ENCODE measurements at regions of chr18 and their contacts with region 1.

Region 1: GRCh38 chr18:22933206-22933957 is at the start of gene RBBP8:
- DNase-seq: peak; percentile 60 to 92 (median 81)
- ATAC-seq: peak; percentile 84
- H3K4me3 ChIP-seq: peak within 1 kb of the TSS; percentile 92
- H3K4me3 Mint-ChIP-seq: peak within 1 kb of the TSS; percentile 84 to 97 (median 92)
- H3K27ac ChIP-seq: peak within 1 kb of the TSS; percentile 86
- H3K27ac Mint-ChIP-seq: peak within 1 kb of the TSS in 8 of 9 donors; percentile 76 to 95 (median 89)
- H3K4me1 ChIP-seq: no peaks in the 10 kb centered on the region
- H3K4me1 Mint-ChIP-seq: peaks cover 7 to 37% (median 12%) of the 10 kb centered on the region in 7 donors
- H3K27me3 ChIP-seq: no peaks in the 10 kb centered on the region
- H3K27me3 Mint-ChIP-seq: peaks cover 0 to 5% (median 0%) of the 10 kb centered on the region in 5 donors
- total RNA-seq, gene RBBP8: 1.5 to 55.8 (median 2.5) TPM

Region 2: DNA sequence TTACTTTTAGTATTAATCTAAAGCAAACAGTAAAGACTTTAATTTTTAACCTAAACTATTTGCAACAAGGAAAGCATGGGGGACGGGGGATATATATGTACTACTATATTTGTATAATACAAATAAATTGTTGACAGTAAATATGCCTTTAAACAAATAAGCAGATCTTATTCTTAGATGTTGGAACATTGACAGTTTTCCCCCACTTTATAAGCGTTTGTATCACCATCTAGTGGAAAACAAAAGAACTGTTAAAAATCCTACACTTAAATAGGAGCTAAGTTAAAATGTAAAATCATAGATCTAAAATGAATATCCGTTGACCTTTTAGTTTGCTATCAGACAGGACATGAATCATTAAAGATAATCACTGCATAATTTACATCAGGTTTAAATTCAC is 49.8 kb after region 1 on chr18:
- CTCF ChIA-PET with region 1: interaction called, 60 read pairs
- POLR2A ChIA-PET with region 1: no interaction called
- intact Hi-C with region 1: loop called (anchors 1 kb)
- DNase-seq: peak in 6 of 9 donors; percentile 8 to 27 (median 21)
- ATAC-seq: peak; percentile 40
- H3K4me3 ChIP-seq: no peak overlapping the region
- H3K4me3 Mint-ChIP-seq: no peak overlapping the region
- H3K27ac ChIP-seq: no peak overlapping the region
- H3K27ac Mint-ChIP-seq: no peak overlapping the region
- H3K4me1 ChIP-seq: no peaks in the 10 kb centered on the region
- H3K4me1 Mint-ChIP-seq: peaks cover 0 to 8% (median 0%) of the 10 kb centered on the region in 7 donors
- H3K27me3 ChIP-seq: no peaks in the 10 kb centered on the region
- H3K27me3 Mint-ChIP-seq: no peaks in the 10 kb centered on the region

Region 3: GRCh38 chr18:23131693-23132319 is 198.4 kb after region 1 on chr18:
- CTCF ChIA-PET with region 1: interaction called, 3 read pairs
- POLR2A ChIA-PET with region 1: no interaction called
- intact Hi-C with region 1: loop called (anchors 1 to 2 kb)
- DNase-seq: peak in 8 of 9 donors; percentile 33 to 73 (median 58)
- ATAC-seq: peak; percentile 64
- H3K4me3 ChIP-seq: no peak overlapping the region
- H3K4me3 Mint-ChIP-seq: no peak overlapping the region
- H3K27ac ChIP-seq: no peak overlapping the region
- H3K27ac Mint-ChIP-seq: peak overlapping the region in 1 of 9 donors; percentile 9
- H3K4me1 ChIP-seq: peaks cover 0 to 14% of the 10 kb centered on the region in 2 donors
- H3K4me1 Mint-ChIP-seq: peaks cover 0 to 20% (median 15%) of the 10 kb centered on the region in 7 donors
- H3K27me3 ChIP-seq: peaks cover 3 to 9% of the 10 kb centered on the region in 2 donors
- H3K27me3 Mint-ChIP-seq: peaks cover 16 to 30% (median 25%) of the 10 kb centered on the region in 5 donors

Region 4: GRCh38 chr18:23377669-23378301 is 444.4 kb after region 1 on chr18:
- CTCF ChIA-PET with region 1: interaction called, 3 read pairs
- POLR2A ChIA-PET with region 1: no interaction called
- intact Hi-C with region 1: loop called in 1 of 2 experiments (anchors 1 kb)
- DNase-seq: no peak
- ATAC-seq: no peak
- H3K4me3 ChIP-seq: no peak overlapping the region
- H3K4me3 Mint-ChIP-seq: no peak overlapping the region
- H3K27ac ChIP-seq: no peak overlapping the region
- H3K27ac Mint-ChIP-seq: peak overlapping the region in 1 of 9 donors; percentile 60
- H3K4me1 ChIP-seq: no peaks in the 10 kb centered on the region
- H3K4me1 Mint-ChIP-seq: peaks cover 0 to 15% (median 0%) of the 10 kb centered on the region in 7 donors
- H3K27me3 ChIP-seq: no peaks in the 10 kb centered on the region
- H3K27me3 Mint-ChIP-seq: no peaks in the 10 kb centered on the region

Region 5: GRCh38 chr18:23586249-23587196 is 653.1 kb after region 1 on chr18 and contains the start of gene NPC1:
- CTCF ChIA-PET with region 1: no interaction called
- POLR2A ChIA-PET with region 1: no interaction called
- intact Hi-C with region 1: loop called (anchors 2 to 5 kb)
- DNase-seq: peak; percentile 88 to 95 (median 93)
- ATAC-seq: peak; percentile 93
- H3K4me3 ChIP-seq: peak within 1 kb of the TSS; percentile 76
- H3K4me3 Mint-ChIP-seq: peak within 1 kb of the TSS; percentile 79 to 96 (median 92)
- H3K27ac ChIP-seq: peak within 1 kb of the TSS; percentile 100
- H3K27ac Mint-ChIP-seq: peak within 1 kb of the TSS; percentile 84 to 97 (median 94)
- H3K4me1 ChIP-seq: peaks cover 9 to 25% of the 10 kb centered on the region in 2 donors
- H3K4me1 Mint-ChIP-seq: peaks cover 25 to 45% (median 37%) of the 10 kb centered on the region in 7 donors
- H3K27me3 ChIP-seq: no peaks in the 10 kb centered on the region
- H3K27me3 Mint-ChIP-seq: peaks cover 0 to 13% (median 0%) of the 10 kb centered on the region in 5 donors
- total RNA-seq, gene NPC1: 29.2 to 49.3 (median 31.4) TPM

Measured in naive thymus-derived CD4-positive, alpha-beta T cell (primary cell).